ENCODE measurements at regions of chr10 and their contacts with region 1.

Region 1: GRCh38 chr10:79068562-79069324 is at the start of gene ZMIZ1:
- DNase-seq: peak; percentile 89
- H3K4me3 ChIP-seq: peak within 1 kb of the TSS; percentile 62 to 84 (median 70)
- H3K27ac ChIP-seq: peak within 1 kb of the TSS; percentile 35
- H3K4me1 ChIP-seq: peaks cover 33% of the 10 kb centered on the region
- H3K27me3 ChIP-seq: no peaks in the 10 kb centered on the region
- CTCF ChIP-seq: peak; percentile 9 to 46
- total RNA-seq, gene ZMIZ1: 22.3 to 25.0 TPM

Region 2: DNA sequence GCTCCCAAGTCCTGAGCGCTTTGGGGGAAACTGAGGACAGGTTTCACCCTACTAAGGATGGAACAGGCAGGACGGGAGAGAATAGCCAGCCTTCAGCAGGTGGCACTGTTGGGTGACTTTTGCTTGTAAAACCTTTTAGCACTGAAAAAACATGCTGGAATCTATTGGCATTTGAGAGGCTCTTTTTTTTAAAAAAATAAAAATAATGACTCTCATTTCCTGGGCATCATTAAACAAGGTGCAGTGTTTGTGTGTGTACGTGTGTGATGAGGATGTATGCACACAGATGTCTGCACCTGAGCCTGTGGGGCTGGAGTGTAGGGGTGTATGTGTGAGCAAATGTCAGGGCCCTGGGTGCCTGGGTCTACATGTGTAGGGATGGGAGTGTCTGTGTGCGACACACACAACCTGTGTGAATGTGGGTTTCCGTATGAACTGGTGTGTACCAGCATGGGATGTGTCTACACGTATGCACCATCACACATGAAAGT is 857.1 kb before region 1 on chr10:
- CTCF ChIA-PET with region 1: no interaction called
- dilution Hi-C with region 1: no loop called
- in situ Hi-C with region 1: no loop called
- intact Hi-C with region 1: loop called (anchors 5 kb)
- DNase-seq: peak; percentile 11
- H3K4me3 ChIP-seq: no peak overlapping the region
- H3K27ac ChIP-seq: no peak overlapping the region
- H3K4me1 ChIP-seq: no peaks in the 10 kb centered on the region
- H3K27me3 ChIP-seq: no peaks in the 10 kb centered on the region
- CTCF ChIP-seq: peak; percentile 31 to 69

Region 3: DNA sequence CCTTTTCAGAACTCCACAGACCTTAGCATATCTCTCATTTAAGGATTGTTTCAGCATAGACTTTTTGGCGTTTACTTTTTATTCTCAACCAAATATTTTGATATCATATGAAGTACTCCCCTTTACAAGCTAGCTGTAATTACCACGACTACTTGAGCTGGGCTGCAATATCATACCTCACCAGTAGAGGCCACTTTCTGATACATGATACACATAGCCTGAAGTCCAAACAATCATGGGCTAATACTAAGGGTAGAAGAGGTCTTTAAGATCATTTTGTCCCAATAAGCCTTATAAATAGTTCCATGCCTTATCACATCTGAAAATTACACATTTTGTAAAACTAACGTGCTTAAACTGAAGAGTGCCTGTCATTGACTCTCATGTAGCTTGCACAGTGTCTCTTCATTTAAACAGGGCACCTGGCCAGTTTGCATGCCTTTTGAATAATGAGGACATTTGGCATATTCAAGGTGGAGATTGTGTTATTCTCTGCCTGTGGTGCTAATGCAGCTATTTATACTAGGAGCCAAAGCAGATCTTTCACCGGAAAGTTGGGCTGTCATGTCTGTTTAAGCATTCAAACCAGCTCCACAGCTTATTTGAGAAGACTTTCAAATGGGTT is 403.7 kb before region 1 on chr10:
- CTCF ChIA-PET with region 1: no interaction called
- dilution Hi-C with region 1: no loop called
- in situ Hi-C with region 1: loop called in 1 of 2 experiments (anchors 25 kb)
- intact Hi-C with region 1: loop called (anchors 2 kb)
- DNase-seq: peak; percentile 20
- H3K4me3 ChIP-seq: no peak overlapping the region
- H3K27ac ChIP-seq: no peak overlapping the region
- H3K4me1 ChIP-seq: no peaks in the 10 kb centered on the region
- H3K27me3 ChIP-seq: peaks cover 2% of the 10 kb centered on the region
- CTCF ChIP-seq: peak; percentile 75 to 91

Region 4: GRCh38 chr10:78972947-78973900 is 95.5 kb before region 1 on chr10:
- CTCF ChIA-PET with region 1: no interaction called
- dilution Hi-C with region 1: no loop called
- in situ Hi-C with region 1: no loop called
- intact Hi-C with region 1: loop called (anchors 1 kb)
- DNase-seq: peak; percentile 84
- H3K4me3 ChIP-seq: peak overlapping the region; percentile 15 to 43 (median 37)
- H3K27ac ChIP-seq: peak overlapping the region; percentile 79
- H3K4me1 ChIP-seq: peaks cover 41% of the 10 kb centered on the region
- H3K27me3 ChIP-seq: no peaks in the 10 kb centered on the region
- CTCF ChIP-seq: no peak

Region 5: DNA sequence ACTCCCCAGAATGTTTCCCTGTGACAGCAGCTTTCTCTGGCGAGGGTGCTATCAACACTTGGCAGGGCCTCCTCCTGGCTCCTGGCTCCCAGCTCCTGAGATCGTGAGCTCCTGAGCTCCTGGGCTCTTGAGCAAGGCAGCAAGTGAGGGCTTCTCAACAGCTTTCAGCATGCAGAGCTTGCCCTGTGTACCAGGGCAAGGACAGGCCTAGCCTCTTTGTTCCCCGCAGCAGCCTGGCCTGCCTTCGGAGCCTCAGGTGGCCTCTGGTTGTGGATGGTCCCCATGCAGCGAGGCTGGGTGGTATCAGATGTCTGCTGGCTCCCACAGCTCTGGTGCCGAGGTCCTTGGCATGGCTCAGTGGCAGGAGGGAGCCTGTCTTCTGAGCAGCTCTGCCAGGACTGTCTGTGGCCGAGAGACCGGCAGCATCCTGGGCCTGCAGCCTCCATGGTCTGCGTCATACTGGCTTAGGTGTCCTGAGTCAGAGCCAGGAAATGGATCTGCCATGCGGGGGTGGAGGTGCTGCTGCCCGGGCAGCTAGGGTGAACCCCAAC is 44.2 kb after region 1 on chr10:
- CTCF ChIA-PET with region 1: no interaction called
- dilution Hi-C with region 1: loop called (anchors 5 kb)
- in situ Hi-C with region 1: no loop called
- intact Hi-C with region 1: loop called (anchors 1 kb)
- DNase-seq: peak; percentile 91
- H3K4me3 ChIP-seq: no peak overlapping the region
- H3K27ac ChIP-seq: peak overlapping the region; percentile 75
- H3K4me1 ChIP-seq: peaks cover 51% of the 10 kb centered on the region
- H3K27me3 ChIP-seq: no peaks in the 10 kb centered on the region
- CTCF ChIP-seq: no peak

Region 6: DNA sequence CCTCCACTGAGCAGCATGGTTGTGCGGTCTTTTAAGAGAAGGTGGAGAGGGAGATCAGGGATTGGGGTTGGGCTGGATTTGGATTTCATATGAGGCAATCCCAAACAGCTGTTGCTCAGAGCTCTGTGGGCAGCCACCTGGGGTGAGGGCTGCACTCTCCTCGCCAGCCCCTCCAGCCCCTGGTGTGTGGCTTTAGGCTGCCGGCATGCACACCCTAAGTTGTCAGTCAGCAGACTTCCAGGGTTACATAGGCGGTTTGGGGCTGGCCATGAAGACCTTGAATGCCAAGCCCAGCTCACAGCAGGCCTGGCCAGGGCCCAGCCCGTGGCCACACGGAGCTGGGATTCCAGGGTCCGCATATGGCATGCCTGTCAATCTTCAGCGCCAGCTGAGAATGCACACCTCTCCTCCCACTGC is 54.8 kb after region 1 on chr10:
- CTCF ChIA-PET with region 1: no interaction called
- dilution Hi-C with region 1: no loop called
- in situ Hi-C with region 1: no loop called
- intact Hi-C with region 1: no loop called
- DNase-seq: no peak
- H3K4me3 ChIP-seq: no peak overlapping the region
- H3K27ac ChIP-seq: no peak overlapping the region
- H3K4me1 ChIP-seq: no peaks in the 10 kb centered on the region
- H3K27me3 ChIP-seq: no peaks in the 10 kb centered on the region
- CTCF ChIP-seq: no peak

Region 7: GRCh38 chr10:79195091-79195923 is 126.6 kb after region 1 on chr10:
- CTCF ChIA-PET with region 1: interaction called, 3 read pairs
- dilution Hi-C with region 1: no loop called
- in situ Hi-C with region 1: no loop called
- intact Hi-C with region 1: loop called (anchors 1 kb)
- DNase-seq: peak; percentile 79
- H3K4me3 ChIP-seq: no peak overlapping the region
- H3K27ac ChIP-seq: no peak overlapping the region
- H3K4me1 ChIP-seq: peaks cover 37% of the 10 kb centered on the region
- H3K27me3 ChIP-seq: no peaks in the 10 kb centered on the region
- CTCF ChIP-seq: peak; percentile 85 to 96

Measured in mammary epithelial cell (primary cell).